SK-N-SH (cell line): ENCODE measurements at regions of chr7 and their contacts with region 1.

Region 1: DNA sequence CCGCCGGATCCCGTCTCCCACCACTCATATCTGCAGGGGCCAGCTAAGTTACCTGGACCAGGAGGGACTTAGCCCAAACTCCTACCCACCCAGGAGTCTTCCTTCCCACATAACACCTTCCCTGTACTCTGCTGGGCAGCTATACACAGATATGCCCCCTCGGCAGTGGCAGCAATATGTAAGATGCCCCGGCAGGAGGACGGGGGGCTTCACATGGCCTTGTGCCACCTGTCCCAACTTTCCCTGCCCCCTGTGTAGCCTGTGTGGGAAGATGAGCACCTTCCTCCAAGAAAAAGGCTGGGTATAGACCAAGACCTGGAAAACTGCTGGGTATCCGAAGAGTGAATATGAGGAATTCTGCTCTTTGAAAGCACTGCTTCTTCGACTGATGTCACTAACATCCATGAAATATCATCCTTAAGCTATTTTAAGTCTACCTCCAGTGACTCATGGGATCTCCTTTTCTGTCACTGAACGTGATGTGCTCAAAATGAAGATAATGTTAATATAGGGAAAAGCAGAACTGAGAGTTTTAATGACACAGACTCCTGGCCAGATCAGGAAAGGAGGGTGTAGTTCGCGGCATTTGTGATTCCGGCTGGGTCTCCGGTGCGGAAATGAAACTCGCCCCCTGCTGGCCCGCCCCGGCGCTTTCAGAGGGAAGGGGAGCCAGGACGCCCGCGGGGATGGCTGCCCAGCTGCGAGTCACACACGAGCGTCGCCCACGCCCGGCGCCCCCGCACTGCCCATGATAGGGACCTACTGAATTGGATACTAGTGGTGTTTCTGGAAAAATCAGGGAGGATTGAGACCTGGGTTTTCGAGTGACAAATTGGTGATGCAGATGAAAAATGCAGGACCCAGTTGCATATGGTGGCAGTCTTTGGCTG is 256.9 kb upstream of the NFE2L3 start:
- DNase-seq: peak; percentile 86
- H3K4me3 ChIP-seq: peak overlapping the region; percentile 25 to 42; a peak in 3 of 4 replicates
- H3K27ac ChIP-seq: no peak overlapping the region
- H3K4me1 ChIP-seq: peaks cover 0 to 5% of the 10 kb centered on the region in 2 experiments; a peak in 2 of 4 replicates
- H3K27me3 ChIP-seq: peaks cover 5% of the 10 kb centered on the region; the same call in 1 of the 2 replicates
- CTCF ChIP-seq: peak; percentile 66
- EP300 ChIP-seq: no peak
- RAD21 ChIP-seq: peak; percentile 35

Region 2: GRCh38 chr7:25812086-25812850 is 82.9 kb before region 1 on chr7:
- CTCF ChIA-PET with region 1: no interaction called
- POLR2A ChIA-PET with region 1: no interaction called
- DNase-seq: no peak
- H3K4me3 ChIP-seq: no peak overlapping the region
- H3K27ac ChIP-seq: no peak overlapping the region
- H3K4me1 ChIP-seq: no peaks in the 10 kb centered on the region; a peak in 2 of 4 replicates
- H3K27me3 ChIP-seq: no peaks in the 10 kb centered on the region
- CTCF ChIP-seq: no peak
- EP300 ChIP-seq: no peak
- RAD21 ChIP-seq: no peak

Region 3: DNA sequence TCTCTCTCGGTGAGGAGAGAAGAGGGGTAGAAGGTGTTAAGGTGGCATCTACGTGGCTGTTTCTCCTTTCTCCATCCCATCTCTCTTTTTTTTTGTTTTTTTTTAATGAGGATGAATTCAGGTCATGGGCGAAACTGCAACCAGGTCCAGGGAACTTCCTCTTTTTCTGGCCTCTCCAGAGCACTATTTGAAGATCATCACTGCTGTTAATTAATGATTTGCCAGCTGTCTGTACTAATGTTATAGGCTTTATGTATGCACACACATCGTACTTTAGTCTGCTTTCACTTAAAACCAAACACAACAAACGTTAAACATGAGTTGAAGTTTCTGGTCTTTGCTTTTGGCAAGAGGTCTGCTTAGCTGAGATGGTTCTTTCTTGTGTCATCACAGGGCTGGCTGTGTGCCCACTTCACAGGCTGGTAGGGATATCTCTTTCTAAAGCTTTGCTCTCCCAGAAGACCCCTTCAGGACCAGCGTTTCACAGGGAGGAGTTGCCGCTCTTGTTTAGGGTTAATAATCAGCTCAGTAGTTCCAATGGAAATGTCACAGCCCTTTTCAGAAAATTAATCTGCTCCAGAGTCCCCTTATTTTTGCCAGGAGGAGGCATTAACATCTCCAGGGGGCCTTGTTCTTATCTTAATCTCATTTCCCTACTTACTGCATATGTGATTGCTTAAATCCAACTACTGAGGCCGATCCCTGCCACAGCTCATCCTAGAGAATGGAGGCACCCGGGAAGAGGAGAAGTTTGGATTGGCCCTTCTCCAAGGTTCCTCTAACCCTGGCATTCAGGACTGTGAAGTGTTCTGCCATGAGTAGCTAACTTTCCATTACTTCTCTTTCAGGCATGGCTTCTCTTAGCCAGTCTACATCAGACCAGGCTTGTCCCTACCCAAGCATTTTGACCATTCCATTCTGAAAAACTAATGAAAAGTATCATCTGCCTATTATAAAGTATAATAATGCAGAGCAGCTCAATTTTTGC is 17.1 kb before region 1 on chr7:
- CTCF ChIA-PET with region 1: interaction called, 111 read pairs
- POLR2A ChIA-PET with region 1: no interaction called
- DNase-seq: no peak
- H3K4me3 ChIP-seq: no peak overlapping the region
- H3K27ac ChIP-seq: no peak overlapping the region
- H3K4me1 ChIP-seq: peaks cover 0 to 5% of the 10 kb centered on the region in 2 experiments; a peak in 1 of 4 replicates
- H3K27me3 ChIP-seq: peaks cover 32% of the 10 kb centered on the region
- CTCF ChIP-seq: no peak
- EP300 ChIP-seq: no peak
- RAD21 ChIP-seq: no peak

Region 4: GRCh38 chr7:25926891-25927625 is 31.9 kb after region 1 on chr7:
- CTCF ChIA-PET with region 1: interaction called, 13 read pairs
- POLR2A ChIA-PET with region 1: no interaction called
- DNase-seq: no peak
- H3K4me3 ChIP-seq: no peak overlapping the region
- H3K27ac ChIP-seq: no peak overlapping the region
- H3K4me1 ChIP-seq: no peaks in the 10 kb centered on the region; a peak in 1 of 4 replicates
- H3K27me3 ChIP-seq: no peaks in the 10 kb centered on the region
- CTCF ChIP-seq: no peak
- EP300 ChIP-seq: no peak
- RAD21 ChIP-seq: no peak

Region 5: DNA sequence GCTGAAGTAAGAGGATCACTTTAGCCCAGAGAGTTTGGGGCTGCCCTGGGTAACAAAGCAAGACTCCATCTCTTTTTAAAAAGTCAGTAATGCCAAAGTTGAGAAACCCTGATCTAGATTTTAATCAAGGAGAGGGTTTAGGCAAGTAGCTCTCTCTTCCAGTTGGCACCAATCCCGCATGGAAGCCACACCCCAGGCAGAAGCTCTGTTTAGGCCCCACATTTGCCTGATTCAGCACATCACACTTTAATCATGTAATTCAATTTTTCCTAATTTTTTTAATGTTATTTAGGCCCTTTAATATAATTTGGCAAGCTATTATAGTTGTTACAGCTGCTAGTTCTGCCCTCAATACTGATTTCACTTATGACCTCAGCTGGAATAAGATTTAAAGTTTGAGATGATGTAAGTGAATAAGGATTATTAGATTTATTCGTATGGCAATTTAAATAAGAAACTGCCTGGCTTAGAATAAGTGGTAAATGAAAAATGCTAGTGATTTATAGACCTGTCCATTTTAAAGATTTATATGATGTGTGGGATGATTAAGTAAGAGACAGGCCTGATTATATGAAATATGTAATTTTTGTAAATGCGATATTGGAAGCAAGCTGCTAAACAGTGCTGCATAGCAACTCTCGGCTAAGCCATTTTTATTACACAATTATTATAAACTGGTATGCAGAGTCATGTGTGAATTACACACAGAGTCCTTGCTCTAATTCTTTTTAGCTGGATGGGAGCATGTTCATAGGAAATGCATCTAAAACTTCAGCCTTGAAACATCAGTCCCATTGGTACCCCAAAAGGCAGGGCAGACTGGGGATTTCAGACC is 176.7 kb after region 1 on chr7:
- CTCF ChIA-PET with region 1: interaction called, 71 read pairs
- POLR2A ChIA-PET with region 1: no interaction called
- DNase-seq: no peak
- H3K4me3 ChIP-seq: no peak overlapping the region
- H3K27ac ChIP-seq: no peak overlapping the region
- H3K4me1 ChIP-seq: peaks cover 0 to 8% of the 10 kb centered on the region in 2 experiments; a peak in 1 of 4 replicates
- H3K27me3 ChIP-seq: peaks cover 21% of the 10 kb centered on the region; the same call in 1 of the 2 replicates
- CTCF ChIP-seq: no peak
- EP300 ChIP-seq: no peak
- RAD21 ChIP-seq: no peak

Region 6: DNA sequence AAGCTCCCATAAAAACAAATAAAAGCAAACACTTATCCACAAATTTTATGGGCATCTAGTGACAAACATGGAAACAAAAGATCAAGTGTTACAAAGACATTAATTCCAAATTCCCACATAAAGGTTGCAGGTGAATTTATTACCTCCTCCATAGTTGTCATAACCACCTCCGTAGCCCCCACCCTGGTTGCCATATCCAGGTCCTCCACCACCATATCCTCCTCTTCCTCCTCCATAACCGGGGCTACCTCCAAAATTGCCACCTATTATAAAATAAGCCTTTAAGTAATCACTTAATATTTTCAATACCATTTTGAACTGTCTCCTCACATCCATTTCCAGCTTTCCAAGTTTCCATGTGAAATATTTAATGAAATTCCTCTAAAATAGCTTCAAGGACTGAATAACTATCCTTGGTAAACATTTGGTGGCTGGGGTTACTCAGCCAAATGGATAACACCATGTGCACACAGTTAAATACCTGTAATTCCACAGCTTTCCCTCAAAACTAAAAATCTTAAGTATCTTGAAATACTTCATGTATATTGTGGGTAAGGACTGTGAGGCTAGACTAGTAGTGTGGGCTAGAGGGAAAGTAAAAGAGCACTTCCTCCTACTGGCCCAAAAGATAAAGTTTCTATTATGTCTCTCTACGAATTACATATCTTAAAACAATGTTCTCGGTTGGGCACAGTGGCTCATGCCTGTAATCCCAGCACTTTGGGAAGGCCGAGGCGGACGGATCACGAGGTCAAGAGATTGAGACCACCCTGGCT is 298.5 kb after region 1 on chr7:
- CTCF ChIA-PET with region 1: interaction called, 24 read pairs
- POLR2A ChIA-PET with region 1: interaction called, 7 read pairs
- DNase-seq: no peak
- H3K4me3 ChIP-seq: no peak overlapping the region
- H3K27ac ChIP-seq: peak overlapping the region; percentile 3 to 32; a peak in 2 of 4 replicates
- H3K4me1 ChIP-seq: peaks cover 35 to 37% of the 10 kb centered on the region in 2 experiments
- H3K27me3 ChIP-seq: no peaks in the 10 kb centered on the region
- CTCF ChIP-seq: no peak
- EP300 ChIP-seq: no peak
- RAD21 ChIP-seq: no peak

Region 7: GRCh38 chr7:26657686-26658396 is 762.7 kb after region 1 on chr7:
- CTCF ChIA-PET with region 1: interaction called, 11 read pairs
- POLR2A ChIA-PET with region 1: no interaction called
- DNase-seq: no peak
- H3K4me3 ChIP-seq: no peak overlapping the region
- H3K27ac ChIP-seq: no peak overlapping the region
- H3K4me1 ChIP-seq: peaks cover 0 to 6% of the 10 kb centered on the region in 2 experiments; a peak in 1 of 4 replicates
- H3K27me3 ChIP-seq: no peaks in the 10 kb centered on the region; the same call in 1 of the 2 replicates
- CTCF ChIP-seq: no peak
- EP300 ChIP-seq: no peak
- RAD21 ChIP-seq: no peak

Region 8: GRCh38 chr7:27160546-27161213 is 1265.5 kb after region 1 on chr7:
- CTCF ChIA-PET with region 1: interaction called, 20 read pairs
- POLR2A ChIA-PET with region 1: no interaction called
- DNase-seq: peak; percentile 96
- H3K4me3 ChIP-seq: peak overlapping the region; percentile 39 to 70
- H3K27ac ChIP-seq: no peak overlapping the region
- H3K4me1 ChIP-seq: peaks cover 0 to 8% of the 10 kb centered on the region in 2 experiments; a peak in 1 of 4 replicates
- H3K27me3 ChIP-seq: peaks cover 91% of the 10 kb centered on the region
- CTCF ChIP-seq: peak; percentile 99
- EP300 ChIP-seq: no peak
- RAD21 ChIP-seq: peak; percentile 94